ENCODE measurements at regions of chr11 and their contacts with region 1.

Region 1: GRCh38 chr11:8682303-8683114 is at the starts of genes RPL27A and TRIM66:
- DNase-seq: peak; percentile 82 to 100
- H3K4me3 ChIP-seq: peak within 1 kb of the TSS; percentile 87 to 98 (median 97)
- H3K27ac ChIP-seq: peak within 1 kb of the TSS; percentile 96
- H3K4me1 ChIP-seq: peaks cover 0 to 8% (median 2%) of the 10 kb centered on the region in 4 experiments; a peak in 4 of 7 replicates
- H3K27me3 ChIP-seq: no peaks in the 10 kb centered on the region
- CTCF ChIP-seq: peak in 1 of 3 experiments; percentile 3; a peak in 1 of 4 replicates
- EP300 ChIP-seq: no peak
- POLR2A ChIP-seq: peak; percentile 99 to 100
- RAD21 ChIP-seq: 0 out of 4 replicates have a peak, but pooled peaks of 1 of the 2 experiments have one; percentile 7
- total RNA-seq, gene RPL27A: 1,756 and 1,761 TPM in 2 replicates
- total RNA-seq, gene TRIM66: 3.0 and 3.1 TPM in 2 replicates

Region 2: GRCh38 chr11:8604078-8604723 is 78.3 kb before region 1 on chr11:
- CTCF ChIA-PET with region 1: no interaction called
- POLR2A ChIA-PET with region 1: interaction called, 16 read pairs
- DNase-seq: peak; percentile 17 to 88
- H3K4me3 ChIP-seq: no peak overlapping the region
- H3K27ac ChIP-seq: no peak overlapping the region
- H3K4me1 ChIP-seq: no peaks in the 10 kb centered on the region
- H3K27me3 ChIP-seq: no peaks in the 10 kb centered on the region
- CTCF ChIP-seq: peak; percentile 81 to 93 (median 86)
- EP300 ChIP-seq: no peak
- POLR2A ChIP-seq: no peak
- RAD21 ChIP-seq: peak; percentile 69 to 77

Region 3: GRCh38 chr11:8649361-8649760 is 33.1 kb before region 1 on chr11:
- CTCF ChIA-PET with region 1: interaction called, 4 read pairs
- POLR2A ChIA-PET with region 1: interaction called, 143 read pairs
- DNase-seq: no peak
- H3K4me3 ChIP-seq: no peak overlapping the region
- H3K27ac ChIP-seq: no peak overlapping the region
- H3K4me1 ChIP-seq: no peaks in the 10 kb centered on the region
- H3K27me3 ChIP-seq: no peaks in the 10 kb centered on the region
- CTCF ChIP-seq: no peak
- EP300 ChIP-seq: no peak
- POLR2A ChIP-seq: no peak
- RAD21 ChIP-seq: no peak

Region 4: DNA sequence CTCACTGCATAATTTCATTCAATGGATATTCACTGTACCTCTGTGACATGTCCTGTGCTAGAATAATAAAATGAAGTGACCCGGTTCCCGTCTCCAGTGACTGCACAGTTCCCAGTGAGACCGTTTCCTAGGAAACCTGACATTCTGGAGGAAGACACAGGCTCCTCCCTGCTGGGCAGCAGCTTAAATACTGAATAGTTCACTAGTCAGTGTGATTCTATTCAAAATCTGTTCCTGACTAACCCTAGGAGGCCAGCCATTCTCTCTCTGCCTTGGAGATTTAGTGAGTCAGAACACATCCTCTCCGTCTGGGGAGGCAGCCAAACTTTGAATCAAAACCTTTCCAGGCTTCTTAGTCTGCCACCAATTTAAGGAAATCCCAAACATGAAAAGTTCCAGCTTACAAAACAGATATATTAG is 11.3 kb before region 1 on chr11:
- CTCF ChIA-PET with region 1: interaction called, 3 read pairs
- POLR2A ChIA-PET with region 1: interaction called, 103 read pairs
- DNase-seq: peak; percentile 61 to 77
- H3K4me3 ChIP-seq: peak overlapping the region in 1 of 4 experiments; percentile 37; a peak in 2 of 8 replicates
- H3K27ac ChIP-seq: peak overlapping the region; percentile 90
- H3K4me1 ChIP-seq: peaks cover 10 to 15% (median 12%) of the 10 kb centered on the region in 4 experiments; a peak in 6 of 7 replicates
- H3K27me3 ChIP-seq: no peaks in the 10 kb centered on the region
- CTCF ChIP-seq: no peak
- EP300 ChIP-seq: 0 out of 3 replicates have a peak, but pooled peaks of 1 of the 2 experiments have one; percentile 64
- POLR2A ChIP-seq: peak; percentile 53 to 88
- RAD21 ChIP-seq: no peak

Region 5: GRCh38 chr11:8717876-8718753 is 35.6 kb after region 1 on chr11:
- CTCF ChIA-PET with region 1: interaction called, 3 read pairs
- POLR2A ChIA-PET with region 1: interaction called, 24 read pairs
- DNase-seq: no peak
- H3K4me3 ChIP-seq: no peak overlapping the region
- H3K27ac ChIP-seq: peak overlapping the region; percentile 42; the same call in 1 of the 2 replicates
- H3K4me1 ChIP-seq: peaks cover 0 to 14% (median 7%) of the 10 kb centered on the region in 4 experiments; a peak in 4 of 7 replicates
- H3K27me3 ChIP-seq: no peaks in the 10 kb centered on the region
- CTCF ChIP-seq: no peak
- EP300 ChIP-seq: no peak
- POLR2A ChIP-seq: no peak
- RAD21 ChIP-seq: no peak

Region 6: DNA sequence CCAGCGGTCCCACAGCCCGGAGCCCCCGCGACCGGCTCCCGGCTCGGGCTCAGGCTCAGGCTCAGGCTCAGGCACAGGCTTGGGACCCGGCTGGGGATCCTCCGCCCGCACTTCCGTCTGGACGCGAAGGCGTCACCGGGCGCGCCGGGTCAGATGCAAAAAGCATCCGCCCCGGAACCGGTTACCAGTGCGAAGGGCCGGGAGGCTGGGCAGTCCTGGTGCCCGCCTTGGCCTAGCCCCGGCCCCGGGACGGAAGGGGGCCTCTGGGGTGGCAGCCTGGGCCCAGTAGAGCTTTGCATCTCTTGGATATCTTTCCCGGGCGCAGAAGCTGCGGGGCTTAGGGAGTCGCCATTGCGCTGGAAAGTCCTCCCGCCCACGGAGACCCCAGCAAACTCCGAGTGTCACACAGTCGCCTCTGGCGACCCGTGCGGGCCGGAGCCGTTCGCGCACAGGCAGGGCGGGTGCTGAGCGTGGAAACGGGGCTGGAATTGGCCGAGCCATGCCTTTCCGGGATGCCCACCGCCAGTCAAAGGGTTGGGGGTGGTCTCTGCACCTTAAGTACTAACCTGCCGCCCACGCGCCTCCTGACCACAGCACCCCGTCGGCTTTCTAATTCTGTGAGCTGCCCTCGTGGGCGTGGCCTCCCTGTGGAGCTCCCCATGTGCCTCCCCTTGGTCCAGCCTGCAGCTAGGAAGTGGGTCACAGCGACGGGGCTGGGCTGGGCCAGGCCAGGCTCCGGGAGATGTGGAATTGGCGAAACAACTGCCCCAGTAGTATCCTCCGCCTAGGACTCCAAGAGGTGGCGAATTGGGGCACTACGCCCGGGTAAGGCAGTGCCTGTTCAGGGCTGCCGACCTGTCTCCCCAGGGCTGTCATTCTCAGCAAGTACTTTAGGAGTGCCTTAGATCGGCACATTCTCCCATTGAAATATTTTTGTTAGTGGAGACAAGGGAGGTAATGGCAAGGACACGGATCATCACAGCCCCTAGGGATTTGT is 282.1 kb after region 1 on chr11 and contains the start of gene TMEM9B:
- CTCF ChIA-PET with region 1: interaction called, 4 read pairs
- POLR2A ChIA-PET with region 1: interaction called, 10 read pairs
- DNase-seq: peak; percentile 56 to 92
- H3K4me3 ChIP-seq: peak within 1 kb of the TSS; percentile 64 to 86 (median 68)
- H3K27ac ChIP-seq: peak within 1 kb of the TSS; percentile 53; the same call in 1 of the 2 replicates
- H3K4me1 ChIP-seq: peaks cover 0 to 4% (median 2%) of the 10 kb centered on the region in 4 experiments; a peak in 3 of 7 replicates
- H3K27me3 ChIP-seq: no peaks in the 10 kb centered on the region
- CTCF ChIP-seq: no peak
- EP300 ChIP-seq: no peak
- POLR2A ChIP-seq: peak; percentile 53 to 91
- RAD21 ChIP-seq: no peak; a peak in 1 of 4 replicates
- total RNA-seq, gene TMEM9B: 9.4 and 10.0 TPM in 2 replicates